Activated T-helper 2 cell treated with anti-CD3 and anti-CD28 coated beads, Interferon-gamma antibody, Interleukin-2, Interleukin-4, amounts not matched to agents 10 μg/mL and 5 μg/mL and 100 μg/mL, durations not matched to agents 14 hours and 24 hours and 36 hours (primary cell): ENCODE measurements at regions of chr7 and their contacts with region 1.

Region 1: DNA sequence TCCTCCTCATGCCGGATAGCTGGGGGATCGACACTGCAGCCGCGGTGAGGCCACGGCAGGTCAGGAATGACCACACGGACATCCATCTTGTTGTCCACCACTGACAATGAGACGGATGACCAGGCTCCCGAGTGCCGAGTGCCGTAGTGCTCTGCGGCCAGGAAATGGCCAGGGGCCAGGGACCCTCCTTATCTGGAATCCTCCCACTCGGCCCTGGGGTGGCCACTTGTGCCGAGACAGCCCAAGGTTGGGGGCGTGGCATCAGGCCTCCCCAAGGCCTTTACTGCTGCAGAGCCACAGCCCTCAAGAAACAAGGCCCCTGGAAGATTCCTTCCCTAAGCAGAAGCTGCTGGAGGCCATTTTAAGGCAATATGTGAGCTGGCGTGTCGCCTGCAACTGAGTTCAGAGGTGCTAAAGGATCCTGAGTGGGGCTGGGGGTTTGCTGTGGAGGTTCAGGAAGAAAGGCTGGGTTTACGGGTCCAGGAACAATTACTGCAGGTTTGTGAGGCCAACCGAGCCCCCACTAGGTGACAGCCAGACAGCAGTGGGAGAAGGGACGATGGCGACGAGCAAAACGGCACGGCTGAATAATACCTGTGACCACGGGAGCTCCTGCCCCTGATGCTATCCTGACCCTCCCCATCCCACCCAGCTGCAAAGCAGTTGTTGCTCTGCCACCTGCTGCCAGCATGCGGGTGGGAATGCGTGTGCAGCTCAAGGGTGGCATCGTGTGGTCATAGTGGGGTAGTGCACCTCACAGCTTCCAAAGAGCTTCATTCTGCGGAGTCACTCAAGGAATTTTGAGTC is 31.6 kb upstream of the LEP start:
- DNase-seq: peak; percentile 51
- H3K4me3 Mint-ChIP-seq: no peak overlapping the region
- H3K27ac Mint-ChIP-seq: no peak overlapping the region
- H3K4me1 Mint-ChIP-seq: no peaks in the 10 kb centered on the region
- H3K27me3 Mint-ChIP-seq: peaks cover 16% of the 10 kb centered on the region

Region 2: GRCh38 chr7:127708788-127709187 is 500.6 kb before region 1 on chr7:
- intact Hi-C with region 1: loop called (anchors 1 kb)
- DNase-seq: peak; percentile 35
- H3K4me3 Mint-ChIP-seq: no peak overlapping the region
- H3K27ac Mint-ChIP-seq: no peak overlapping the region
- H3K4me1 Mint-ChIP-seq: peaks cover 6% of the 10 kb centered on the region
- H3K27me3 Mint-ChIP-seq: no peaks in the 10 kb centered on the region